ENCODE measurements at regions of chr7 and their contacts with region 1.

Region 1: DNA sequence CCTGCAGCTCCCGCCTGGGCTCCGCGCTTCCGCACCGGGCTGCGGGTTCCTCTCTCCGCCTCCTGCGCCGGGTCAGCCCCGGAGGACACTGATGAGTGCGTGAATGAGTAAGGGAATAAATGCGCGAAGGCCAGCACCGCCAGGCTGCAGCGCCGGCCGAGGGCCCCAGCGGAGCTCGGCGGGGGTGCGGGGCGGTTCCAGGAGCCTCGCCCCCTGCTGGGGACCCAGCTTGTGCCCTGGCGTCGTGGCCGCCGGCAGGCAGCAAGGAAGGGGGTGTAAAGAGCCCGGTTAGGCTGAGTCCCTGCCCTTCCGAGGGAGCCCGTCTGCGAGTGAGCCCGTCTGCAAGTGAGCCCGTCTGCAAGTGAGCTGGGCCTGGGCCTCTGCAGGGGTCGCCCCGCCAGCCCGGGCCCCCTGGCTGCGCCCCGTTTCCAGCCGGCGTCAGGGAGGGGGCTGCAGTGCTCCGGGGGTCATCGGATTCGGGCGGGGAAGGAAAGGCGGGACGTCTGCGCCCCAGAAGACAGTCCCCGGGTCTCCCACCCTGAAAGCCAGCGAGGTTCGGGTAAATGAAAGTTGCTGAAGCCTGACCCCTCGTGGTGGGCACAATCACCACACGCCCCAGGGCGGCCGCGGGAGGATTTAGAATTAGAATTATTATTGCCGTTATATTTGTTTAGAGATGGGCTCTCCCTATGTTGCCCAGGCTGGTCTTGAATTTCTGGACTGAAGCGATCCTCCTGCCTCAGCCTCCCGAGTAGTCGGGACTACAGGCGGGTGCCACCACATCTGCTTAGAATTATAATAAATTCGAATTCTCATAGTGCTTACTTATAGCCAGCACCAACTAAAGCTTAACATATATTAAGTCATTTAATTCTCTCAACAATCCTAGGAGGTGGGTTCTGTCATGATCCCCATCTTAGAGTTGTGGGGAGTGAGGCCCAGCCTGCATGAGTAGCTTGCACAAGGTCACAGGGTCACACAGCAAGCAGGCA is 8.6 kb upstream of the CRYGN start:
- DNase-seq: peak; percentile 85
- CTCF ChIP-seq: peak; percentile 74

Region 2: GRCh38 chr7:151368136-151368571 is 80.4 kb before region 1 on chr7:
- CTCF ChIA-PET with region 1: interaction called, 77 read pairs
- POLR2A ChIA-PET with region 1: no interaction called
- DNase-seq: peak; percentile 84
- CTCF ChIP-seq: peak; percentile 92

Region 3: DNA sequence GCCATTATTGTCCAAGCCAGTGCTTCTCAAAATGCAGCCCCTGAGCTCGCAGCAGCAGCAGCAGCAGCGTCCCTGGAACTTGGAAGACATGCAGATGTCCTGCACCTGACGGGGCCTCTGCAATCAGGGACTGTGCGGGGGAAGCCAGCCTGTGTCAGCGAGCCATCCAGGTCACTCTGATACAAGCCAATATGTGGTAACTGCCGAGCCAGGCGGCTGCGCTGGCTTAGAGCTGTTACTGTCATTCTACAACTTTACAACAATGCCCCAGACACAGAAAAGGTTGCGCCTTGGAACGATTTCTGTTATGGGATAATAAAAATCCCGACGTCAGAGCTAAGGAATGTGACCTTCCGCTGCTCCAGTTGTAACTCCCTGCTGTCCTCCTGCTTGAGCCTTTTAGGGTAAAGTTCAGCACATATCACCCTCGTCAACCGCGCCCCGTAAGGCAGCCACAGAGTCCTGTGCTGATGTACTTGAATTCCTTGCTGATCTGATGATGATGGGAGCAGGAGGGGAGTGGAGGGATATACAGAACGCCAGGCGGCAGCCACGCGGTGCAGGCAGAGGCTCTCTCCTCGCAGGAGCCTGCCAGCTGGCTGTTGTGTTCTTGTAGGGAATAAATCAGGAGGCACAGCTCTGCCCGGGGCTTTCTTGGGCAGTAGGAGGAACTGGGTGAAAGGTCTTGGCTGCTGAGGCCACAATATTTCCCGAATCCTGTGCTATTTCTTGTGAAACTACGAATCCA is 11.3 kb after region 1 on chr7:
- CTCF ChIA-PET with region 1: interaction called, 30 read pairs
- POLR2A ChIA-PET with region 1: no interaction called
- DNase-seq: peak; percentile 13
- CTCF ChIP-seq: no peak

Region 4: GRCh38 chr7:151498495-151498894 is 49.9 kb after region 1 on chr7:
- CTCF ChIA-PET with region 1: interaction called, 13 read pairs
- POLR2A ChIA-PET with region 1: no interaction called
- DNase-seq: no peak
- CTCF ChIP-seq: no peak

Measured in GM10248 (cell line).